ENCODE measurements at regions of chr9 and their contacts with region 1.

Region 1: DNA sequence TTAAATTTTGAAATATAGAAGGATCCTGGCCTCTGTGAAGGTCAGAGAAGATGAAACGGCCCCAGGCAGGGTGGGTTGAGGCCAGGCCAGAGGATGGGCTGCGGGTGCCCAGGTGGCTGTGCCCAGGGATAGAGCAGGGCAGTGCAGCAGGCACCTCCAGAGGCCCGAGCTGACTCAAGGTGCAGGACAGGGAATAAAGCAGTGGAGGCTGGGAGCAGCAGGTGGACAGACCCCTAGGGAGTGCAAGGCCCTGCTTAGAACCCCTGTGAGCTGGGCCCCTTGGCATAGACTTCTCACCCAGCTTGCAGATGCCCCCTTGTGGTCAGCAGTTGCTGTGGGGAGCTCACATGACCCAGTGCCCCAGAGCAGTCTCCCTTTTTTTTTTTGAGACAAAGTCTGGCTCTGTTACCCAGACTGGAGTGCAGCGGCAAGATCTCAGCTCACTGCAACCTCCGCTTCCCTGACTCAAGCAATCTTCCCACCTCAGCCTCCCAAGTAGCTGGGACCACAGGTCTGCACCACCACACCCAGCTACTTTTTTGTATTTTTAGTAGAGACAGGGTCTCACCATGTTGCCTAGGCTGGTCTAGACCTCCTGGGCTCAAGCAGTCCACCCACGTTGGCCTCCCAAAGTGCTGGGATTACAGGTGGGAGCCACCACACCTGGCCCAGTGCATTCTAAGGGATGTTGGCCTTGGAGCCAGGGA is 118.8 kb downstream of the WNK2 start:
- DNase-seq: peak; percentile 69
- H3K4me3 Mint-ChIP-seq: no peak overlapping the region
- H3K27ac Mint-ChIP-seq: no peak overlapping the region
- H3K4me1 Mint-ChIP-seq: no peaks in the 10 kb centered on the region
- H3K27me3 Mint-ChIP-seq: no peaks in the 10 kb centered on the region
- CTCF ChIP-seq: peak; percentile 54

Region 2: DNA sequence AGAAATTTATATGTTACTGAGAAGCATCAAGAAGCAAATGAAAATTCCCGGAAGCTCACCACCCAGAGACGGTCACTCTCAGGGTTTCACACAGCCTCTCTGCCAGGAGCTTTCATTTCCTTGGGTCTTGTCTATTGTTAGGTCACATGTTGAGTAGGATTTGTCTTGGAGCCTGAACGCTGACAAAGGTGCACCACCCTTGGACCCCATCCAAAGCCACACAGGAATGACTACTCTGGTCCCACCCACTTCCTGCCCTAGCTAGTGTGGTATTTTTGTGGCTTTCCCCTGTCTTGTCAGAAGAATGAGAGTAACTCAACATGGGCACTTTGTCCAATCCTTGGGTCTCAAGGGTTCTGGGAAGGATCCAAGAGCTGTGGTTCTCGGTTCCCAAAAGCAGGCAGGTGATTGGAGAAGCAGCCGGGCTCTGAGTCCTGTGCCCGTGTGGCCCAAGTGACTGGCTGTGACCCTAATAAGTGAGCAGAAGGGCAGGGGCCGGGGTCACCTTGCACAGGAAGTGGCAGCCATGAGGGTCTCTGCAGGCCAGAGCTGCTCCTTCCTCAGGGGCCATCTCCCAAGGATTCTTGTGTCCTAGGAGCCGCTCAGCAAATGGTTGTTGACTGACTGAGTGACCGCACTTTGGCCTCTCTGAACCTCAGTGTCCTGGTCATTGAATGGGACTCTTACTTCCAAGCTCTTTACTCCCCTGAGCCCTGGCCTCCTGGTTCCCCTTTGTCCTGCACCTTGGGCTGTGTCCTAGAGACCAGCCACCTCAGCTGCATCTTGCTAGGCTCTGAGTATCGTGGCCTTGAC is 348.4 kb before region 1 on chr9:
- CTCF ChIA-PET with region 1: interaction called, 10 read pairs
- POLR2A ChIA-PET with region 1: no interaction called
- intact Hi-C with region 1: no loop called
- DNase-seq: peak; percentile 85
- H3K4me3 Mint-ChIP-seq: peak overlapping the region; percentile 52
- H3K27ac Mint-ChIP-seq: peak overlapping the region; percentile 71
- H3K4me1 Mint-ChIP-seq: peaks cover 21% of the 10 kb centered on the region
- H3K27me3 Mint-ChIP-seq: no peaks in the 10 kb centered on the region
- CTCF ChIP-seq: no peak

Region 3: DNA sequence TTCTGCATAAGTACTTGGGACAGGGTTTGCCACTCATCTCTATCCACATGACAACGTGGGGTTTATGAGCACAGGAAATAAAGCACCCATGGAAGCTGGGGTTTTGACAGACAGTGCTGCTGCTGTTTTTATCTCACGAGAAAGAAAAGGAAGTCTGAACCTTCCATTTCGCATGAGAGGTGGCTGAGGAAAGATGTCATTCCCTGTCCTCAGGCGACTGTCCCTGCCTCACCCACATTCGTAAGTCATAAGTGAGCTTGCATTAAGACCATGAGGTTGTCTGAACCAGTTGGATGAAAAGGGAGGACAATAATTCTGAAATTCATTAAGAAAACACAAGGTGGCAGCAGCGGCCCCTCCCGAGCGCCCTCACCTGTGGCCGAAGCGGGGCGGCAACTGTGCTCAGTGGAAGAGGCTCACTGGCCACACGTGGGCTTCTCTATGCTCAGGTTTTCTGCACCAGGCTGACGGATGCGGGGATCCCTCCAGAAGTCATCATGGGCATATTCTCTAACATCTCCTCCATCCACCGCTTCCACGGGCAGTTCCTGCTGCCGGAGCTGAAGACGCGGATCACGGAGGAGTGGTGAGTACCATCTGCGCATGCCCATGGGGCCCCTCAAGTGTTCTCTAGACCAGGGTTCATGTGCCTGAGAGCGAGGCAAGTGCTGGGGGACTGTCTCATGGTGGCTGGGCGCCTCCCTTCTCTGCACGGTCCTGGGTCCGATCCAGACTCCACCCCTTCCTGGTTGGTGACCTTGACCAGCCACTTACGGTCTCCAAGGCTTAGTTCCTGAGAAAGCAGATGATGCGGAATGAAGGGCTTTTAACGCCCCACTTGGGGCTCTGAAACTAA is 298.9 kb before region 1 on chr9:
- CTCF ChIA-PET with region 1: interaction called, 6 read pairs
- POLR2A ChIA-PET with region 1: no interaction called
- intact Hi-C with region 1: loop called (anchors 10 kb)
- DNase-seq: peak; percentile 69
- H3K4me3 Mint-ChIP-seq: no peak overlapping the region
- H3K27ac Mint-ChIP-seq: no peak overlapping the region
- H3K4me1 Mint-ChIP-seq: no peaks in the 10 kb centered on the region
- H3K27me3 Mint-ChIP-seq: no peaks in the 10 kb centered on the region
- CTCF ChIP-seq: peak; percentile 67

Region 4: GRCh38 chr9:93154315-93154903 is 148.3 kb before region 1 on chr9:
- CTCF ChIA-PET with region 1: interaction called, 19 read pairs
- POLR2A ChIA-PET with region 1: no interaction called
- intact Hi-C with region 1: no loop called
- DNase-seq: peak; percentile 54
- H3K4me3 Mint-ChIP-seq: no peak overlapping the region
- H3K27ac Mint-ChIP-seq: no peak overlapping the region
- H3K4me1 Mint-ChIP-seq: no peaks in the 10 kb centered on the region
- H3K27me3 Mint-ChIP-seq: no peaks in the 10 kb centered on the region
- CTCF ChIP-seq: peak; percentile 62

Region 5: DNA sequence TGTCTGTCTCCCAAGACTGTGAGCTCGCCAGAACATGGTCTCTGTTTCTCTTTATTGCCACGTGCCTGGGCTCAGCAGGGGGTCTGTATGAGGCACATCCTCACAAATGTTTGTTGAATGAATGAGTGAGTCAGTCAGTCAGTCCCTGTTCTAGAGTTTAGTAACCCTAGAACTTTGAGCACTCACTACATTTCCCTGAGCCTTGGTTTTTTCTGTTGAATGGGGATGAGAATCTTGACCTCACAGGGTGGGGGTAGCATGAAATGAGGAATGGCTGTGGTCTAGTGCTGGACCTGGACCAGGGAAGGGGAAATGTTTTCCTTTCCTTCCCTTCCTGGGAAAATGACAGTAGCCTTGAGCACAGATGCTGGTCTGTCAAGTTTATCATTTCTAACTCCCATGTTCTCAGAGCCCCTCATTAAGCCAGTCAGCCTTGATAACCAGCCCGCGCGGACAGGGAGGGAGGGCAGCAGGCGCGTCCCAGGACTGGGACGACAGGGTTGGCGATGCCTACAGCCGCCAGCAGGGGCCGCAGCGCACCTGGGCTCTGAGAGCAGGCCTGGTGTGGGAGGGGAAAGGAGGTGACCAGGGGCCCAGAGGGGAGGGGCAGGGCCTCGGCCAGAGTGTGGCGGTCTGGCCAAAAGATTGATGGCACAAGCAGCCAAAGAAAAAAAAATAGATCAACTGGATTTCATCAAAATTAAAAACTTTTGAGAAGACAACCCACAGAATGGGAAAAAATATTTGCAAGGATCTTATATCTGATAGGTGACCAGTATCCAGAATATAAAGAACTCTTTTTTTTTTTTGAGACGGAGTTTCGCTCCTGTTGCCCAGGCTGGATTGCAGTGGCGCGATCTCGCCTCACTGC is 142.9 kb before region 1 on chr9:
- CTCF ChIA-PET with region 1: interaction called, 19 read pairs
- POLR2A ChIA-PET with region 1: no interaction called
- intact Hi-C with region 1: loop called (anchors 1 kb)
- DNase-seq: peak; percentile 79
- H3K4me3 Mint-ChIP-seq: no peak overlapping the region
- H3K27ac Mint-ChIP-seq: no peak overlapping the region
- H3K4me1 Mint-ChIP-seq: no peaks in the 10 kb centered on the region
- H3K27me3 Mint-ChIP-seq: no peaks in the 10 kb centered on the region
- CTCF ChIP-seq: peak; percentile 94

Region 6: DNA sequence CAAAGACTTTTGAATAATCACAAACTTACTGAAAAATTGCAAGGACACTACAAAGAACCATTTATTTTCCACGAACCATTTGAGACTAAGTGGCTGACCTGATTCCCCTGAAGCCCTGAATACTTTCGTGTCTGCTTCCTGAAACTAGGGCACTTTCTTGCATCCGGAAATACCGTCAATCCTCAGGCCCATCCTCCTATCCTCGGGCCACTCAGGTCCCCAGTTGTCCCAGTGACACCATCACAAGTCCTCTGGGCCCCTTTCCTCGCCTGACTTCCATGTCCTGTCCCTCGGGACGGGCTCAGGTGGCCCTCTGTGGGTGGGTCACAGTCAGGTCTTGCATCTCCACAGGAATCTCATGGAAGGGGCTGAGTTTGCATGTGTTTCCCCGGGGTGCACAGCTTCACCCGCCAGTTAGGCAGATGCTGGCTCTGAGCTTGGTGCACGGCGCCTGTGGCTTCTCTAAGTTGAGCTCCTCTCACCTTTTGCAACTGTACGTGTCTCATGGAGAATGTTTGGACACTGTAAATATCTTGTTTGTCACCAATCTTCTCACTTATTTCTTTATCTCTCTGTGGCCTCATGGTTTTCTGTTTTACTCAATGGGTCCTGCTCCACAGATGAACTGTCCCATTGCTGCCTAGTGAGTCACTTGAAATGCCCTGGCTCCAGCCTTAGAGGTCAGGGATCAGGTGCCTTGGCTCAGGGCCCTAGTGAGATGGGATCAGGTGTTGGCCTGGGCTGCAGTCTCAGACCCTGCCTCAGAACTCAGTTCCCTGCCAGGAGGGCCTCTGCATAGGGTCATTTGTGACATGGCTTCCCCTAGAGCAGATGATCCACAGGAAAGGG is 57.4 kb before region 1 on chr9:
- CTCF ChIA-PET with region 1: no interaction called
- POLR2A ChIA-PET with region 1: no interaction called
- intact Hi-C with region 1: no loop called
- DNase-seq: no peak
- H3K4me3 Mint-ChIP-seq: no peak overlapping the region
- H3K27ac Mint-ChIP-seq: no peak overlapping the region
- H3K4me1 Mint-ChIP-seq: no peaks in the 10 kb centered on the region
- H3K27me3 Mint-ChIP-seq: no peaks in the 10 kb centered on the region
- CTCF ChIP-seq: no peak

Region 7: DNA sequence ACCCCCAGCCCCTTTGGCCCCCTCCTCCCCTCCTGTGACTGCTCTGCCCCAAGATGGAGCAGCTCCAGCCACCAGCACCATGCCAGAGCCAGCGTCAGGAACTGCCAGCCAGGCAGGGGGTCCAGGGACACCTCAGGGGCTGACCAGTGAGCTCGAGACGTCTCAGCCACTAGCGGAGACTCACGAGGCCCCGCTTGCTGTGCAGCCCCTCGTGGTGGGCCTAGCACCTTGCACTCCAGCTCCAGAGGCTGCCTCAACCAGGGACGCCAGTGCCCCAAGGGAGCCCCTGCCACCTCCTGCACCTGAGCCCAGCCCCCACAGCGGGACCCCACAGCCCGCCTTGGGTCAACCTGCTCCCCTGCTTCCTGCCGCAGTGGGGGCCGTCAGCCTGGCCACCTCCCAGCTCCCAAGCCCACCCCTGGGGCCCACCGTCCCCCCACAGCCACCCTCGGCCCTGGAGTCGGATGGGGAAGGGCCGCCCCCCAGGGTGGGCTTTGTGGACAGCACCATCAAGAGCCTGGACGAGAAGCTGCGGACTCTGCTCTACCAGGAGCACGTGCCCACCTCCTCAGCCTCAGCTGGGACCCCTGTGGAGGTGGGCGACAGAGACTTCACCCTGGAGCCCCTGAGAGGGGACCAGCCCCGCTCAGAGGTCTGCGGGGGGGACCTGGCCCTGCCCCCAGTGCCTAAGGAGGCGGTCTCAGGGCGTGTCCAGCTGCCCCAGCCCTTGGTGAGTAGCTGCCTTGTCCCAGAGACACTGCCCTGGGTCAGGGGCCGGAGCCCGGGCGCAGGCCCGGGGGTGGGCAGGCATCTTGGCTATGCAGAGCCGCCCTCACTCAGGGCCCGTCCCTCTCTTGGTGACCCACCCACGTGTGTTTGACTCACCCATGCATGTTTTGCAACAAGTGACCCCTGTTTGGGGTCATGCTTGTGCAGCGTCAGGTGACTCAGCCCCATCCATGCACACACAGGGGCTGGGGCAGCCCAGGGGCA is 13.5 kb before region 1 on chr9:
- CTCF ChIA-PET with region 1: interaction called, 12 read pairs
- POLR2A ChIA-PET with region 1: no interaction called
- intact Hi-C with region 1: no loop called
- DNase-seq: peak; percentile 60
- H3K4me3 Mint-ChIP-seq: no peak overlapping the region
- H3K27ac Mint-ChIP-seq: no peak overlapping the region
- H3K4me1 Mint-ChIP-seq: no peaks in the 10 kb centered on the region
- H3K27me3 Mint-ChIP-seq: peaks cover 47% of the 10 kb centered on the region
- CTCF ChIP-seq: no peak

Measured in MCF 10A (cell line).